ENCODE measurements at regions of chr2 and their contacts with region 1.

Region 1: GRCh38 chr2:160970052-160970965 is 189.9 kb upstream of the TANK start:
- DNase-seq: peak; percentile 39
- H3K4me3 ChIP-seq: no peak overlapping the region
- H3K27ac ChIP-seq: peak overlapping the region; percentile 26
- H3K4me1 ChIP-seq: peaks cover 11% of the 10 kb centered on the region
- H3K27me3 ChIP-seq: no peaks in the 10 kb centered on the region
- CTCF ChIP-seq: peak; percentile 73 to 78

Region 2: DNA sequence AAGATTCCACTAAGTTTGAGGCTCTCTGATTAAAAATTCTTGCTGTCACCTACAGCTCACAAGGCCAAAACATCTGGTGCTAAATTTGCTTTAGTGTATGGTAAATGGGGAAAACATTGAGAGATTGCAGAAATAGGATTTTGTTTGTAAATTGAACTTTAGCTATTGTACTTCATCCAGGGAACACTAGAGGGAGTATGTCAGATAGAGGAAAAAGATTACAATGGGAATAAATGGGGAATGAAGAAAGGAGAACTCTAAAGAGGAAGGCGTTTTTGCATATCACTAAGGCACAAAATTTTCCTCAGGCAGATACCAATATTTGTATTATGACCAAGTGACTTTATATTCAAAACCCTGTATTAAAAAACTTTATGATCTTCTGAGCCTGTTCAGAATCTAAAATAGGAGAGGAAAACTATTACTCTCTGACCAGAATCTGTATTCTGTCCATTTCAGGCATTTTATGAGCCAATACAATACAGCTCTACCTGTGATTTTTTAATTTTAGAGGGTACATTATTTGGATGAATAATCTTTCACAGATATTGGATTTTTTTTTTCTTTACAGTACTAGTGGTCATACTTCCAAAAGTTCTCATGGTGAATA is 717.9 kb before region 1 on chr2:
- CTCF ChIA-PET with region 1: no interaction called
- dilution Hi-C with region 1: no loop called
- in situ Hi-C with region 1: no loop called
- intact Hi-C with region 1: loop called (anchors 1 kb)
- DNase-seq: no peak
- H3K4me3 ChIP-seq: no peak overlapping the region
- H3K27ac ChIP-seq: no peak overlapping the region
- H3K4me1 ChIP-seq: peaks cover 16% of the 10 kb centered on the region
- H3K27me3 ChIP-seq: no peaks in the 10 kb centered on the region
- CTCF ChIP-seq: peak; percentile 76 to 83

Region 3: GRCh38 chr2:160353166-160353565 is 617.1 kb before region 1 on chr2:
- CTCF ChIA-PET with region 1: no interaction called
- dilution Hi-C with region 1: no loop called
- in situ Hi-C with region 1: no loop called
- intact Hi-C with region 1: loop called (anchors 1 kb)
- DNase-seq: no peak
- H3K4me3 ChIP-seq: no peak overlapping the region
- H3K27ac ChIP-seq: peak overlapping the region; percentile 53
- H3K4me1 ChIP-seq: peaks cover 28% of the 10 kb centered on the region
- H3K27me3 ChIP-seq: no peaks in the 10 kb centered on the region
- CTCF ChIP-seq: peak in 1 of 2 donors; percentile 51

Region 4: GRCh38 chr2:160429248-160430000 is 540.9 kb before region 1 on chr2:
- CTCF ChIA-PET with region 1: no interaction called
- dilution Hi-C with region 1: no loop called
- in situ Hi-C with region 1: no loop called
- intact Hi-C with region 1: loop called (anchors 1 kb)
- DNase-seq: peak; percentile 42
- H3K4me3 ChIP-seq: no peak overlapping the region
- H3K27ac ChIP-seq: peak overlapping the region; percentile 11
- H3K4me1 ChIP-seq: peaks cover 47% of the 10 kb centered on the region
- H3K27me3 ChIP-seq: no peaks in the 10 kb centered on the region
- CTCF ChIP-seq: peak; percentile 46 to 57

Region 5: GRCh38 chr2:160666154-160667060 is 303.9 kb before region 1 on chr2:
- CTCF ChIA-PET with region 1: no interaction called
- dilution Hi-C with region 1: no loop called
- in situ Hi-C with region 1: no loop called
- intact Hi-C with region 1: loop called (anchors 5 kb)
- DNase-seq: peak; percentile 97
- H3K4me3 ChIP-seq: peak overlapping the region in 2 of 3 experiments; percentile 1 to 3
- H3K27ac ChIP-seq: peak overlapping the region; percentile 87
- H3K4me1 ChIP-seq: peaks cover 26% of the 10 kb centered on the region
- H3K27me3 ChIP-seq: no peaks in the 10 kb centered on the region
- CTCF ChIP-seq: no peak

Region 6: DNA sequence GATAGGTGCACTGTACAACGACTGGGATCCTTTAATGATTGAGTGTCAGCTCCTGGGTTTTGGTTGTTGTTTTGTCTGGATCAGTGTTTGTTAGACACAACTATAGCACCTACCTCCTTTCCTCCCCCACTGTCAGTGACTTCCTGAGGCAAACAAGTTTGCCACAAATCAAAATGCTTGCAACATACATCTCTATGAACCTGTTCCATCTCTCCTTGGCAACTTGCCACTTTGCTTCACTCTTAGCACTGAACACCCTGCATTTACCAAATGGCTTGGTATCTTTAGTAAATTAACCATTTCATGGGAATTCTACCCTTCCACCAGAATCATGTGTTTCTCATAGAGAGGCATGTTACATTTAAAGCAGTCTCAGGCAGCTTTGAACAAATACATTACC is 111.2 kb before region 1 on chr2:
- CTCF ChIA-PET with region 1: no interaction called
- dilution Hi-C with region 1: no loop called
- in situ Hi-C with region 1: no loop called
- intact Hi-C with region 1: no loop called
- DNase-seq: no peak
- H3K4me3 ChIP-seq: no peak overlapping the region
- H3K27ac ChIP-seq: no peak overlapping the region
- H3K4me1 ChIP-seq: no peaks in the 10 kb centered on the region
- H3K27me3 ChIP-seq: no peaks in the 10 kb centered on the region
- CTCF ChIP-seq: no peak

Region 7: GRCh38 chr2:160876765-160877164 is 93.5 kb before region 1 on chr2:
- CTCF ChIA-PET with region 1: no interaction called
- dilution Hi-C with region 1: no loop called
- in situ Hi-C with region 1: no loop called
- intact Hi-C with region 1: no loop called
- DNase-seq: peak; percentile 27
- H3K4me3 ChIP-seq: no peak overlapping the region
- H3K27ac ChIP-seq: no peak overlapping the region
- H3K4me1 ChIP-seq: no peaks in the 10 kb centered on the region
- H3K27me3 ChIP-seq: no peaks in the 10 kb centered on the region
- CTCF ChIP-seq: no peak

Region 8: GRCh38 chr2:160994141-160995002 is 24.1 kb after region 1 on chr2:
- CTCF ChIA-PET with region 1: interaction called, 7 read pairs
- dilution Hi-C with region 1: no loop called
- in situ Hi-C with region 1: no loop called
- intact Hi-C with region 1: loop called (anchors 1 kb)
- DNase-seq: peak; percentile 89
- H3K4me3 ChIP-seq: no peak overlapping the region
- H3K27ac ChIP-seq: no peak overlapping the region
- H3K4me1 ChIP-seq: no peaks in the 10 kb centered on the region
- H3K27me3 ChIP-seq: no peaks in the 10 kb centered on the region
- CTCF ChIP-seq: peak; percentile 67 to 80

Measured in mammary epithelial cell (primary cell).